Left cardiac atrium (tissue), 4 donors: ENCODE measurements at regions of chr2 and their contacts with region 1.

Region 1: GRCh38 chr2:32356735-32357644 is at the start of gene BIRC6:
- DNase-seq: peak; percentile 99
- ATAC-seq: peak; percentile 96 to 98
- total RNA-seq, gene BIRC6: 38.6 to 52.5 TPM

Region 2: GRCh38 chr2:32168513-32168912 is 188.5 kb before region 1 on chr2:
- intact Hi-C with region 1: loop called in 1 of 2 experiments (anchors 5 kb)
- DNase-seq: no peak
- ATAC-seq: no peak

Region 3: GRCh38 chr2:32342801-32343200 is 14.2 kb before region 1 on chr2:
- intact Hi-C with region 1: no loop called
- DNase-seq: no peak
- ATAC-seq: no peak